Activated B cell treated with CpG ODN at 0.5 μM for 24 hours (primary cell): ENCODE measurements at regions of chr1 and their contacts with region 1.

Region 1: GRCh38 chr1:77978969-77979876 is at the start of gene FUBP1:
- DNase-seq: peak; percentile 81
- ATAC-seq: peak; percentile 74
- H3K4me3 Mint-ChIP-seq: no peak within 1 kb of the TSS
- H3K27ac Mint-ChIP-seq: no peak within 1 kb of the TSS
- H3K4me1 Mint-ChIP-seq: peaks cover 31% of the 10 kb centered on the region
- H3K27me3 Mint-ChIP-seq: no peaks in the 10 kb centered on the region
- CTCF ChIP-seq: no peak
- total RNA-seq, gene FUBP1: 259 and 282 TPM in 2 replicates

Region 2: GRCh38 chr1:77539519-77540142 is 439.6 kb before region 1 on chr1:
- CTCF ChIA-PET with region 1: no interaction called
- POLR2A ChIA-PET with region 1: no interaction called
- intact Hi-C with region 1: loop called (anchors 1 kb)
- DNase-seq: no peak
- ATAC-seq: no peak
- H3K4me3 Mint-ChIP-seq: peak overlapping the region; percentile 59
- H3K27ac Mint-ChIP-seq: peak overlapping the region; percentile 88
- H3K4me1 Mint-ChIP-seq: peaks cover 31% of the 10 kb centered on the region
- H3K27me3 Mint-ChIP-seq: no peaks in the 10 kb centered on the region
- CTCF ChIP-seq: no peak

Region 3: DNA sequence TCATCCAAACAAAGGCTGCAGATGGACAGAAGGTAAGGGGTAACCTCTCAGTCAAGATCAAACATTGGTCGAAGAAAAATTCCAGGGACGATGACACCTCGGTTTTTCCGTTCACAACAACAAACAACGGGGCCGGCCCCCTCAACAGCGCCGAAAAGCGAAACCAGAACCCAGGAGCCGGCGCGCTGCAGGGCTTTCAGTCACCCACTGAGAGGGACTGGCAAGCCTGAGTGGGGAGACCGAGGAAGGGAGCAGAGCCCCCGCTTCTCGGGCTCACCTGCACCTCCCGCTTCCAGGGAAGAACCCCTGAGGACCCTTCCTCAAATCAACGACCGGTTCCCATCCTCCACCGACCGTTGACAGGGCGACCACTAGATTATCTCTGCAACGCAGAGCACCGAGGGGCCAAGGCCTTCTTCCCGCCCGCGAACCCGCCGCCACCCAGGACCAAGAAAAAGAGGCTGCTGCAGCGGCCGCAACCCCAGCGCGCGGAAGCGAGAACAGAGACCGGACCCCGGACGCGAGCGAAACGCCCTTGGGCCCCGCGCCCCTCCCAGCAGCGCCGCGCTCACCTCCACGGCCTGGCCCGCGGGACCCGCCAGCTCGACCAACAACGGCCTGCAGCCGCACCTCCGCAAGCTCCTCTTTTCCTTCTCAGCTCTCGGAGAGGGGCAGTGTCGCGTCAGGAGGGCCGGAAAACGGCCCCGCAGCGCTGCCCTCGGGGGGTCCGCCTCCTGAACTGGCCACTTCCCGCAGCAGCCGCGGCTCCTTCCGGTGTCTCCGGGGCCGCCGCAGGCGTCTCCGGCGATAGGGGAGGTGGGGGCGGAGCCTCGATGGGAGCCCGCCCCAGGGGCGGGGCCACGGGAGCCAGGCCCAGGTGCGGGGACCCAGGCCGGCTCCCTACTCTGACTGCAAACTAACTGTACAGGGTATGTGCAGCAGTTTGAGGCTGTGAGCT is 219.9 kb before region 1 on chr1 and contains the start of gene USP33:
- CTCF ChIA-PET with region 1: no interaction called
- POLR2A ChIA-PET with region 1: interaction called, 4 read pairs
- intact Hi-C with region 1: loop called (anchors 1 kb)
- DNase-seq: peak; percentile 95
- ATAC-seq: peak; percentile 97
- H3K4me3 Mint-ChIP-seq: peak within 1 kb of the TSS; percentile 93
- H3K27ac Mint-ChIP-seq: peak within 1 kb of the TSS; percentile 87
- H3K4me1 Mint-ChIP-seq: peaks cover 32% of the 10 kb centered on the region
- H3K27me3 Mint-ChIP-seq: peaks cover 2% of the 10 kb centered on the region
- CTCF ChIP-seq: no peak
- total RNA-seq, gene USP33: 42.1 and 58.4 TPM in 2 replicates

Region 4: GRCh38 chr1:77779529-77780281 is 199.5 kb before region 1 on chr1 and contains the start of gene MIGA1:
- CTCF ChIA-PET with region 1: no interaction called
- POLR2A ChIA-PET with region 1: interaction called, 16 read pairs
- intact Hi-C with region 1: loop called (anchors 1 kb)
- DNase-seq: peak; percentile 69
- ATAC-seq: peak; percentile 96
- H3K4me3 Mint-ChIP-seq: peak within 1 kb of the TSS; percentile 92
- H3K27ac Mint-ChIP-seq: peak within 1 kb of the TSS; percentile 82
- H3K4me1 Mint-ChIP-seq: peaks cover 28% of the 10 kb centered on the region
- H3K27me3 Mint-ChIP-seq: no peaks in the 10 kb centered on the region
- CTCF ChIP-seq: no peak
- total RNA-seq, gene MIGA1: 11.1 and 13.0 TPM in 2 replicates

Region 5: GRCh38 chr1:77847621-77848080 is 131.6 kb before region 1 on chr1:
- CTCF ChIA-PET with region 1: no interaction called
- POLR2A ChIA-PET with region 1: no interaction called
- intact Hi-C with region 1: no loop called
- DNase-seq: no peak
- ATAC-seq: no peak
- H3K4me3 Mint-ChIP-seq: no peak overlapping the region
- H3K27ac Mint-ChIP-seq: no peak overlapping the region
- H3K4me1 Mint-ChIP-seq: peaks cover 2% of the 10 kb centered on the region
- H3K27me3 Mint-ChIP-seq: no peaks in the 10 kb centered on the region
- CTCF ChIP-seq: no peak

Region 6: GRCh38 chr1:77961392-77961791 is 17.8 kb before region 1 on chr1:
- CTCF ChIA-PET with region 1: no interaction called
- POLR2A ChIA-PET with region 1: interaction called, 8 read pairs
- intact Hi-C with region 1: loop called (anchors 2 kb)
- DNase-seq: no peak
- ATAC-seq: no peak
- H3K4me3 Mint-ChIP-seq: no peak overlapping the region
- H3K27ac Mint-ChIP-seq: no peak overlapping the region
- H3K4me1 Mint-ChIP-seq: no peaks in the 10 kb centered on the region
- H3K27me3 Mint-ChIP-seq: no peaks in the 10 kb centered on the region
- CTCF ChIP-seq: no peak

Region 7: DNA sequence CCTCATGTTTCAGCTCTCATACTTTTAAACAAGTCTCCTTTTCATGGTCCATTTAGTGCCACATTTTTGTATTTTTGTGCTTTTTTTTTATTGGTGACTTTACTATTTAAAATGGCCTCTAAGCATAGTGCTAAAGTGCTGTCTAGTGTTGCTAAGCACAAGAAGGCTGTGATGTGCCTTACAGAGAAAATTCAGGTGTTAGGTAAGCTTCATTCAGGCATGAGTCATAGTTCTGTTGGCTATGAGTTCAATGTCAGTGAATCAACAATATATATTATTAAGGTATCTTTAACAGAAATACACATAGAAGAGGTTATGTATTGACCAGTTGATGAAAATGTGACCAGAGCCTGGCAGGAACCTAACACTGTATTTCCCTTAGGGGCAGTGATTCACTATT is 12.4 kb after region 1 on chr1:
- CTCF ChIA-PET with region 1: interaction called, 3 read pairs
- POLR2A ChIA-PET with region 1: interaction called, 14 read pairs
- intact Hi-C with region 1: no loop called
- DNase-seq: no peak
- ATAC-seq: no peak
- H3K4me3 Mint-ChIP-seq: no peak overlapping the region
- H3K27ac Mint-ChIP-seq: no peak overlapping the region
- H3K4me1 Mint-ChIP-seq: peaks cover 2% of the 10 kb centered on the region
- H3K27me3 Mint-ChIP-seq: no peaks in the 10 kb centered on the region
- CTCF ChIP-seq: no peak

Region 8: GRCh38 chr1:78081980-78082860 is 103.0 kb after region 1 on chr1:
- CTCF ChIA-PET with region 1: no interaction called
- POLR2A ChIA-PET with region 1: no interaction called
- intact Hi-C with region 1: no loop called
- DNase-seq: no peak
- ATAC-seq: no peak
- H3K4me3 Mint-ChIP-seq: no peak overlapping the region
- H3K27ac Mint-ChIP-seq: no peak overlapping the region
- H3K4me1 Mint-ChIP-seq: peaks cover 15% of the 10 kb centered on the region
- H3K27me3 Mint-ChIP-seq: no peaks in the 10 kb centered on the region
- CTCF ChIP-seq: no peak

Region 9: GRCh38 chr1:78222225-78222961 is 243.2 kb after region 1 on chr1:
- CTCF ChIA-PET with region 1: no interaction called
- POLR2A ChIA-PET with region 1: no interaction called
- intact Hi-C with region 1: no loop called
- DNase-seq: no peak
- ATAC-seq: no peak
- H3K4me3 Mint-ChIP-seq: no peak overlapping the region
- H3K27ac Mint-ChIP-seq: no peak overlapping the region
- H3K4me1 Mint-ChIP-seq: no peaks in the 10 kb centered on the region
- H3K27me3 Mint-ChIP-seq: peaks cover 7% of the 10 kb centered on the region
- CTCF ChIP-seq: no peak

Region 10: GRCh38 chr1:78274814-78275213 is 295.6 kb after region 1 on chr1:
- CTCF ChIA-PET with region 1: no interaction called
- POLR2A ChIA-PET with region 1: no interaction called
- intact Hi-C with region 1: no loop called
- DNase-seq: no peak
- ATAC-seq: no peak
- H3K4me3 Mint-ChIP-seq: no peak overlapping the region
- H3K27ac Mint-ChIP-seq: no peak overlapping the region
- H3K4me1 Mint-ChIP-seq: no peaks in the 10 kb centered on the region
- H3K27me3 Mint-ChIP-seq: no peaks in the 10 kb centered on the region
- CTCF ChIP-seq: no peak